PC-9 (cell line): ENCODE measurements at regions of chr4 and their contacts with region 1.

Region 1: GRCh38 chr4:41318867-41319535 is 62.3 kb downstream of the UCHL1 start:
- DNase-seq: peak; percentile 74 to 98
- H3K4me3 ChIP-seq: no peak overlapping the region; the same call in 1 of the 2 replicates
- H3K27ac ChIP-seq: peak overlapping the region; percentile 98
- H3K4me1 ChIP-seq: peaks cover 72% of the 10 kb centered on the region
- H3K27me3 ChIP-seq: no peaks in the 10 kb centered on the region
- CTCF ChIP-seq: no peak

Region 2: DNA sequence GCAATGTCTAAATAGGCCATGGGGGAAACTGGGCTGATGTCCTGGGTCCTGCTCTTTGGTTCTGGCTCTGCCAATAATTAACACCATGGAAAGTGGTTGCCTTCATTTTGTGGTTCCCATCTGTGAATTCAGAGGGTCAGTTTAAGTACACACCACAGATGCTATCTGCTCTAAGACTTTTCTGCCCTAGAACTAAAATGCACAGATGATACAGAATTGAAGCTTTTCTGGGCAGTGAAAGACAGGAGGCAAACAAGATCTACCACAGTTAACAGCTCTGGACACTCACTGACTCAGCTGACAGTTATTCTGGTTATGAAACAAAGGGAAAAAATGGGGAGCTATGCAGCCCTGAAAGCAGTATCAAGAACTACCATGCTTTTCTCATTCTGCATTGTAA is 142.0 kb before region 1 on chr4:
- CTCF ChIA-PET with region 1: no interaction called
- POLR2A ChIA-PET with region 1: no interaction called
- intact Hi-C with region 1: no loop called
- DNase-seq: peak; percentile 25 to 57
- H3K4me3 ChIP-seq: no peak overlapping the region
- H3K27ac ChIP-seq: no peak overlapping the region
- H3K4me1 ChIP-seq: peaks cover 24% of the 10 kb centered on the region; the same call in 1 of the 2 replicates
- H3K27me3 ChIP-seq: no peaks in the 10 kb centered on the region
- CTCF ChIP-seq: 0 out of 2 replicates have a peak, but pooled peaks have one; percentile 21

Region 3: GRCh38 chr4:41281038-41281634 is 37.9 kb before region 1 on chr4:
- CTCF ChIA-PET with region 1: interaction called, 4 read pairs
- POLR2A ChIA-PET with region 1: interaction called, 5 read pairs
- intact Hi-C with region 1: loop called (anchors 1 kb)
- DNase-seq: peak; percentile 48 to 72
- H3K4me3 ChIP-seq: no peak overlapping the region
- H3K27ac ChIP-seq: no peak overlapping the region
- H3K4me1 ChIP-seq: peaks cover 23% of the 10 kb centered on the region
- H3K27me3 ChIP-seq: no peaks in the 10 kb centered on the region
- CTCF ChIP-seq: peak; percentile 91

Region 4: DNA sequence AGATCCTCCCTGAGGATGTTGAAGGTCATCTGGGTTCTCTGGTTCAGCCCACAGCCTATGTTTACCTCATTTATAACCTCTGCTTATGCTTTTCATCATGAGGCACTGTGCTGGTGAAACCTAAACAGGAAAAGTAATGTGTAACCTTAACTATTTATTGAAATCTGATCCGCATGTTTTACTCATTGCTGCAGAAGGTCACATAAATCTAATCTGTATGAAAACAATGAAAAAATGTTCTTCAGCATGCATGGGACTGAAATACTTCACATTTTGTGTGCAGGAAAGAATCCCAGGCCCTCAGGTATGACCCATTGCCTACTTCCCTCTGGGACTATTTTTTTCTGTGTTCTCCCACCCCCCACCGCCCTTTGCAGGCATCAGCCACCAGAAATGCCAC is 32.0 kb before region 1 on chr4:
- CTCF ChIA-PET with region 1: interaction called, 4 read pairs
- POLR2A ChIA-PET with region 1: no interaction called
- intact Hi-C with region 1: loop called (anchors 1 kb)
- DNase-seq: peak; percentile 44 to 96
- H3K4me3 ChIP-seq: no peak overlapping the region
- H3K27ac ChIP-seq: peak overlapping the region; percentile 89
- H3K4me1 ChIP-seq: peaks cover 40% of the 10 kb centered on the region
- H3K27me3 ChIP-seq: no peaks in the 10 kb centered on the region
- CTCF ChIP-seq: no peak

Region 5: GRCh38 chr4:41432881-41433280 is 113.9 kb after region 1 on chr4:
- CTCF ChIA-PET with region 1: no interaction called
- POLR2A ChIA-PET with region 1: no interaction called
- intact Hi-C with region 1: loop called (anchors 1 kb)
- DNase-seq: peak; percentile 21 to 94
- H3K4me3 ChIP-seq: no peak overlapping the region
- H3K27ac ChIP-seq: peak overlapping the region; percentile 85
- H3K4me1 ChIP-seq: peaks cover 56% of the 10 kb centered on the region
- H3K27me3 ChIP-seq: no peaks in the 10 kb centered on the region
- CTCF ChIP-seq: no peak

Region 6: DNA sequence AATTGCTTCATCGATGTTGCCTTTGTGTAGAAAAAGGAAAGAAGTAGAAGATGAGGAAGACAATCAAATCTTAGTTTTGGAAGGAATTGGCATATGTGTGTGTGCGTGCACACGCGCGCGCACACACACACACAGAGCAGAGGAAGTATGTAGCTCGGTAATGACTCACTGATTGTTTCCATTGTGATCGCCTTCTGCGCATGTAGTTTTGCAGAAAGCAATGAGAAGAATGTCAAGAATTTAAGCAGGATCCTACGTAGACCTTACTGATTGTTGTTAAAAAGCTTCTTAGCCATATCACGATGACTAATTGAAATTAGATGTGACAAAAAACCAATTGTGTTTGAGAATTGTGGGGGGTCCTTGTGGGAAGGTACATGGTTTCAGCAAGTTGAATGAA is 206.1 kb after region 1 on chr4:
- CTCF ChIA-PET with region 1: no interaction called
- POLR2A ChIA-PET with region 1: interaction called, 6 read pairs
- intact Hi-C with region 1: loop called (anchors 1 kb)
- DNase-seq: peak; percentile 66 to 97
- H3K4me3 ChIP-seq: no peak overlapping the region
- H3K27ac ChIP-seq: peak overlapping the region; percentile 97
- H3K4me1 ChIP-seq: peaks cover 42% of the 10 kb centered on the region
- H3K27me3 ChIP-seq: no peaks in the 10 kb centered on the region
- CTCF ChIP-seq: no peak